Astrocyte of the cerebellum (primary cell): ENCODE measurements at regions of chr6 and their contacts with region 1.

Region 1: DNA sequence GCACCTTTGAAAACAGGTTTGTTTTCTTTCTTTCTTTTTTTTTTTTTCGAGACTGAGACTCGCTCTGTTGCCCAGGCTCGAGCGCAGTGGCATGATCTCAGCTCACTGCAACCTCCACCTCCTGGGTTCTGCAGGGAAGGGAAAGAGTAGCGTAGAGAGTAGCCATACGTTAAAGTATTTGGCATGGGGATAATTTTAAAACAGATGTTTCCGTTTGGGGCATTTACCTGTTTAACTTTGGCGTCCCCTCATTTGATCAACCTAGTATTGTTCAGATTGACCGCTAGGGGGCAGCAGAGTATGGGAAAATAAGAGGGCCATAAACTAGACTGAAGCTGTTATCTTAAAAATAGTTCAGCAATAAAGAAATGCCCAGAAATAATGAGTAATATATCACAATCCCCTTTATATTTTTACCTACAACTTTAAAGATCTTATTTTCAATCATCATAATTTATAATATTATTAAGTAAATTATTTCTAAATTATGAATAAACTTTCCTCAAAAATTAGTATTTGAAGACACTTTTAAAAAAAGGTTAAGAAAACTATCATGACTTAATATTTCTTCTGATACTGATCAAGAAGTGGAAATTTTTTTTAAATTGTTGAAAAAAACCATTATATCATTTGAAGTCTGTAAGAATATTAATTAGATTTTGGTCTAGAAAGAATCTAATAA is 7.6 kb upstream of the TAAR9 start:
- DNase-seq: peak; percentile 58
- H3K4me3 ChIP-seq: no peak overlapping the region
- CTCF ChIP-seq: peak; percentile 68

Region 2: GRCh38 chr6:132341646-132342045 is 188.8 kb before region 1 on chr6:
- in situ Hi-C with region 1: no loop called
- DNase-seq: peak; percentile 24
- H3K4me3 ChIP-seq: no peak overlapping the region
- CTCF ChIP-seq: no peak

Region 3: DNA sequence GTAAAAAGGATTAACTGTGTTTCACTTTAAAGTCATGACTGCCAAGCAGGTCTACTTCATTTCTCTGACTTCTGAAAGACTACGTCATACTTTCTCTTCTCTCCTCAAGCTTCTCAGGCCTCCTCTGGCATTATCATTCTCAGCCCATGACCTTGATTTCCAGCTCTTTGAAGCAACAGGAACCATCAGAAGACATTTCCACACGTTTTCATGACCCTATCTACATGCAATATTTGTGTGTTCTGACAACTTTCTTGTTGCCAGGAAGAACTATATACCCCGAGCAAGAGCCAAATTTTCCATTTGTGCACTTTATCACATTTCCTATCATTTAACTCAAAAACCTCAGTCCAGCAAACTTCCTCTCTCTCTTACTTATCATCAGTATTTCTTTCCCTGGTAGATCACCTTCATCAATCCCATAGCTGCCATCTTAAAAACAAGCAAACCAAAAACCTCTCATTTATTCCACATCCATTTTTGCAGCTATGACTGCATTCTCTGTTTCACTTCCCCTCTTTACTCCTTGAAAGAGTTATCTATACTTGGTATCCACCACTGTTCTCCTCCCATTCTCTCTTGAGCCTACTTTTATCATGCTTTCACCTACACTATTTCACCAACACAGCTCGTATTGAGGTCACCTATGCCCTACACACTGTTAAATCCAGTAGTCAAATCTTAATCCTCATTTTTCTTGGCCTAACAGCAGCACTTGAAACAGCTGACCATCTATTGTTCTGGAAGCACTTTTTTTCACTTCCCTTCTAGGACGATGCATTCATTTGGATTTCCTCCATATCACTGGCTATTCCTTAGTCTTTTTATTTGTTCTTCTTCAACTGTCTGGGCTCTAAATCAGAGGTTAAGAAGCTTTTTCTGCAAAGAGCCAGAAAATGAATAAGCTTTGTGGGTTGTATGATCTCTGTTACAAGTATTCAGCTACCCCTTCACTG is 64.6 kb before region 1 on chr6:
- in situ Hi-C with region 1: no loop called
- DNase-seq: no peak
- H3K4me3 ChIP-seq: no peak overlapping the region
- CTCF ChIP-seq: no peak

Region 4: DNA sequence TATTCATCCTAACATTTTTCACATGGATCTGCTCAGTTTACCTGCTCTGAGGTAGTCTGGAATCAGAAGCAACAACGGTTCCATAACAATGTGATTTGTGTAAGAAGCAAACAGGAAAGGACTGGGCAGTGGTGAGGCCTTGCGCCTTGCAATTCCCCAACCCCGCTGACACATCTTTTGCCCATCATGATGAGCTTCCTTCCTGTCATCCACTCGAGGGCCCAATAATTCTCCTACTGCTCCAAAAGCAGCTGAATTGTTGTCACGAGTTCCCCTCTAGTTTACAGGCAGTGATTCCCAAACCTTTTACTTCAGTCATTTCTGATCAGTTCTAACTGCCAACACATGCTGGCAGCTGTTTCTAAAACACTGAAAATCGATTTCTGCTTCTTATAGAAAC is 40.4 kb before region 1 on chr6:
- in situ Hi-C with region 1: no loop called
- DNase-seq: no peak
- H3K4me3 ChIP-seq: no peak overlapping the region
- CTCF ChIP-seq: no peak

Region 5: GRCh38 chr6:132798869-132799538 is 268.6 kb after region 1 on chr6:
- in situ Hi-C with region 1: loop called (anchors 25 kb)
- DNase-seq: peak; percentile 22
- H3K4me3 ChIP-seq: peak overlapping the region; percentile 70
- CTCF ChIP-seq: peak; percentile 86